ENCODE measurements at regions of chr5 and their contacts with region 1.

Region 1: DNA sequence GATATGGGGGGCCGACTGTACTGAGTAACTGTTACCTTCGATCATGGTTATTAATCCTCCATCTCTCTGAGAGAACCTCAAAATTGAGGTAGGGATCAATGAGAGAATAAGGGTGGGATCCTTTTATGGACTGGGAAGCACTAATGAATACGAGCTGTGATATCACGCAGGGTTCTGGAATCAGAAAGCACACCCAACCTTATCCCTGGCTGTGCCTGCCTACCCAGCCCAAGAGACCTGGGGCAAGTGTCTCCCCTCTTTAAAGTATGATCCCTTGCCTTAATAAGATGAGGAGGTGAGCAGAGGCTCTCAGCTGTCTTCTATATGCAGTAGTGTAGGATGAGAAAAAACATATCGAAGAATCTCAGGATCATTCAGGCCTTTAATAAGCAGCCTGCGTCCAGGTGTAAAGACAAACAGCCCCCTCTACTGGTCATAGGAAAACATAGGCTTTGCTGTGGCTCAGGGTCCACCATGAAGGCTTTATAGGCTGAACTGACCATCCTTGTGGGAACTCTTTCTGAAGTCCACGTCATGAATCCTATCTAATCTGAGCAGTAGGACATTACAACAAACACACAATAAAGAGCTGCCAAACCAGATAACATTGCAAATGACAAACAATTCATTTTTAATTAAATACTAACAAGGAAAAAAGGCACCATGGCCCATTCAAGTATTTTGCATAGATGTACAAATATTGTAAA is 16.8 kb downstream of the NIPAL4 start:
- DNase-seq: peak; percentile 72
- H3K4me3 ChIP-seq: no peak overlapping the region
- H3K27ac ChIP-seq: no peak overlapping the region
- H3K4me1 ChIP-seq: no peaks in the 10 kb centered on the region
- H3K27me3 ChIP-seq: peaks cover 4% of the 10 kb centered on the region
- CTCF ChIP-seq: peak; percentile 74

Region 2: GRCh38 chr5:157142317-157143126 is 334.3 kb before region 1 on chr5 and contains the start of gene MED7:
- CTCF ChIA-PET with region 1: no interaction called
- POLR2A ChIA-PET with region 1: no interaction called
- intact Hi-C with region 1: loop called (anchors 10 kb)
- DNase-seq: peak; percentile 97
- H3K4me3 ChIP-seq: peak within 1 kb of the TSS; percentile 64
- H3K27ac ChIP-seq: peak within 1 kb of the TSS; percentile 86
- H3K4me1 ChIP-seq: peaks cover 5% of the 10 kb centered on the region
- H3K27me3 ChIP-seq: no peaks in the 10 kb centered on the region
- CTCF ChIP-seq: no peak
- total RNA-seq, gene MED7: 8.7 and 9.4 TPM in 2 replicates

Region 3: GRCh38 chr5:157253547-157253946 is 223.3 kb before region 1 on chr5:
- CTCF ChIA-PET with region 1: interaction called, 3 read pairs
- POLR2A ChIA-PET with region 1: no interaction called
- intact Hi-C with region 1: loop called (anchors 5 kb)
- DNase-seq: peak; percentile 42
- H3K4me3 ChIP-seq: no peak overlapping the region
- H3K27ac ChIP-seq: no peak overlapping the region
- H3K4me1 ChIP-seq: no peaks in the 10 kb centered on the region
- H3K27me3 ChIP-seq: no peaks in the 10 kb centered on the region
- CTCF ChIP-seq: peak; percentile 71

Region 4: DNA sequence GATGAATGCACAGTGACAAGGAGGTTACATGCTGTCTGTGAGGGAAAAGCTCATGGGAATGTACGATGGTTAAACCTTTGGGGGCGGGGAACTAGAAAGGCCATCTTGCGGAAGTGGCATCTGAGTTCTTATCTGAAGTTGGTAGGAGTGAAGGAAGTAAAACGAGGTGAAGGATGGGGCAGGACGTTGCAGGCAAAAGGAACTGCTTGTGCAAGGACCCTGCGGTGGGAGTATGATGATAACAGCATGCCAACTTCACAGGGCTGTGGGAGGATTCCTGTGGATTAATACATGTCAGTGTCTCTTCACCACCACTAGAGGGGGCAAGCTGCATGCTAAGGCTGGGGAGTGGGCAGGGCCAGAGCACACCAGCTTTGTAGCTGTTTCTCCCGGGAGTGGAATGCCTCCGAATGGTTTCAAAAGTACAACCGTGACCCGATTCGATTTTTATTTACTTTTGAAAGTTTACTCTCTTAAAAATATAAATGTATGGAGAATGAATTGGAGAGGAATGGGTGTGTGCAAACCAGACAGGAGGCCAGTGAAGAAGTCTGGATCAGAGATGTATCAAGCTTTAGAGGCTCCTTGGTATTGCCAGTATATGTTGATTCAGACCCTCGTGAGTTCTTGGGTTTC is 148.5 kb before region 1 on chr5:
- CTCF ChIA-PET with region 1: interaction called, 3 read pairs
- POLR2A ChIA-PET with region 1: no interaction called
- intact Hi-C with region 1: loop called (anchors 5 kb)
- DNase-seq: peak; percentile 76
- H3K4me3 ChIP-seq: peak overlapping the region; percentile 14
- H3K27ac ChIP-seq: no peak overlapping the region
- H3K4me1 ChIP-seq: no peaks in the 10 kb centered on the region
- H3K27me3 ChIP-seq: no peaks in the 10 kb centered on the region
- CTCF ChIP-seq: peak; percentile 83

Region 5: DNA sequence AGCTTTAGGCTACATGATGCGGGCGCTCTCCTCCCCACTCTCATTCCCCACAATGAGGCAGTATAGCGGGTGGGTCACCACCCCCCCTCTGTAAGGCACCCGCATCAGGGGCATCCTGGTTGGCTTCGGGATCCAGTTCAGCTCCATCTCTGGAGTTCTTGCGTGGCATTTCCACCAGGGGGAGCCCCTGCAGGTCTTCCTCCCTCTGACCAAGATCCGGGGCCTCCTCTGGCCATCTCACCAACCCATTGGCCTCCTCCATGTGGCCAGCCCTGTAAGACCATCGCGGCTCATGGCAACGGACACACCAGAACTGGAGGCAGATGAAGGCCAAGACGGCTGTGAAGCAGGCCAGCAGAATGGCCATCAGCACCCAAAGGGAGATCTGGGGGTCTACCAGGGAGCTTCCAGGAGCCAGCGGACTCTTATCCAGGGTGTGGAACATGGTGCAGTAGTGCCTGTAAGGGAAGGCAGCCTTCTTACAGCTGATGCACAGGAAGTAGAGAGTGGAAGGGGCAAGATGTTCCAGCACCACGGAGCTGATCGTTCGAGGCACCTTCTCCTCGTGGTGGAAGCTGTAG is 133.9 kb before region 1 on chr5:
- CTCF ChIA-PET with region 1: interaction called, 7 read pairs
- POLR2A ChIA-PET with region 1: no interaction called
- intact Hi-C with region 1: loop called (anchors 1 kb)
- DNase-seq: peak; percentile 26
- H3K4me3 ChIP-seq: no peak overlapping the region
- H3K27ac ChIP-seq: no peak overlapping the region
- H3K4me1 ChIP-seq: no peaks in the 10 kb centered on the region
- H3K27me3 ChIP-seq: no peaks in the 10 kb centered on the region
- CTCF ChIP-seq: peak; percentile 71

Region 6: GRCh38 chr5:157366741-157367674 is 109.8 kb before region 1 on chr5:
- CTCF ChIA-PET with region 1: interaction called, 7 read pairs
- POLR2A ChIA-PET with region 1: no interaction called
- intact Hi-C with region 1: loop called (anchors 1 kb)
- DNase-seq: peak; percentile 66
- H3K4me3 ChIP-seq: no peak overlapping the region
- H3K27ac ChIP-seq: no peak overlapping the region
- H3K4me1 ChIP-seq: peaks cover 10% of the 10 kb centered on the region
- H3K27me3 ChIP-seq: no peaks in the 10 kb centered on the region
- CTCF ChIP-seq: peak; percentile 60

Region 7: GRCh38 chr5:157718519-157718918 is 241.7 kb after region 1 on chr5:
- CTCF ChIA-PET with region 1: interaction called, 5 read pairs
- POLR2A ChIA-PET with region 1: no interaction called
- intact Hi-C with region 1: loop called (anchors 5 kb)
- DNase-seq: peak; percentile 67
- H3K4me3 ChIP-seq: no peak overlapping the region
- H3K27ac ChIP-seq: no peak overlapping the region
- H3K4me1 ChIP-seq: no peaks in the 10 kb centered on the region
- H3K27me3 ChIP-seq: no peaks in the 10 kb centered on the region
- CTCF ChIP-seq: peak; percentile 56

Region 8: DNA sequence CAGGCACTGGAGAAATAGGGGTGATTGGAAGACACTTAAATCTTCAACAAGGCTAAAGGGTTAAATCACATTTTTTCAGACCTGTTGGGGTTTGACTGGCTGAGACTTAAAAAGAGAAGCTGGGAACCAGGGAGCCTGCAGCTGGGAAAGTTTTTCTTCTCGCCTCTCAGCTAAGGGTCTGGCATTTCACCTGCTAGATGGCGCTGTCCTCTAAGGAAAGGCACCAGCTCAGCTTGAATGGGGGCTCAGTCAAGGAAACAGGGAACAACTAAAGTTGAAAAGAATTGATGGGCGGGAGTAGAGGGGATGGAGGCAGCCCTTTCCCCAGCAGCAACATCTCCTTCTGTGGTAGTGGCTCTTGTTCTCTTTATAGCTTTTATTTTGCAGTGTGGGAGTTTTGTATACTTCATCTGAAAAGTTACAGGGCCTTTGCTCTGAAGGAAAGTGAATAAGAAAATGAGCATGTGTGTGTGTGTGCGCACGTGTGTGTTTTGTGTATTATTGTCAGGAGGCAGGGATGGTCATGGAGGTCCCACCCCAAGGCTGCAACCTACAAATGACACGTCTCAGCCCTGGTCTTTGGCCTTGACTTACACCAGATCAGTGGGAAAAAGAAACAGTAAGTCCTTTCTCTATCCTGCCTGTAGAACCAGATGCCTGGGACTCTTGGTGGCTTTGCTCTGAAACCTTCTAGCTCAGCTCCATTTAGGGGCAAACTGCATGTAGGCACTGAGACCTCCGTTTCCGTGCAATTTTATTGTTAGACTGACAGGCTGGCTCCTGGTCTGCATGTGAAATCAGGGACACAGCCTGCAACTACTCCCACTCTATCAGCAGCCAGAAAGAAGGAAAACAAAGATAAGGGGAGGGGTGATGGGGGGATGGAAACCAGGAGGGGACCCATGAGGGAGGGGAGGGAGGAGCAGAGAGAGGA is 698.3 kb after region 1 on chr5:
- CTCF ChIA-PET with region 1: no interaction called
- POLR2A ChIA-PET with region 1: no interaction called
- intact Hi-C with region 1: no loop called
- DNase-seq: peak; percentile 61
- H3K4me3 ChIP-seq: no peak overlapping the region
- H3K27ac ChIP-seq: no peak overlapping the region
- H3K4me1 ChIP-seq: no peaks in the 10 kb centered on the region
- H3K27me3 ChIP-seq: no peaks in the 10 kb centered on the region
- CTCF ChIP-seq: peak; percentile 71

Measured in A673 (cell line).